A673 (cell line): ENCODE measurements at regions of chr11 and their contacts with region 1.

Region 1: GRCh38 chr11:109939166-109939810 is 153.9 kb upstream of the ZC3H12C start:
- DNase-seq: peak; percentile 91
- H3K4me3 ChIP-seq: no peak overlapping the region
- H3K27ac ChIP-seq: no peak overlapping the region
- H3K4me1 ChIP-seq: peaks cover 7% of the 10 kb centered on the region
- H3K27me3 ChIP-seq: no peaks in the 10 kb centered on the region
- CTCF ChIP-seq: peak; percentile 90

Region 2: DNA sequence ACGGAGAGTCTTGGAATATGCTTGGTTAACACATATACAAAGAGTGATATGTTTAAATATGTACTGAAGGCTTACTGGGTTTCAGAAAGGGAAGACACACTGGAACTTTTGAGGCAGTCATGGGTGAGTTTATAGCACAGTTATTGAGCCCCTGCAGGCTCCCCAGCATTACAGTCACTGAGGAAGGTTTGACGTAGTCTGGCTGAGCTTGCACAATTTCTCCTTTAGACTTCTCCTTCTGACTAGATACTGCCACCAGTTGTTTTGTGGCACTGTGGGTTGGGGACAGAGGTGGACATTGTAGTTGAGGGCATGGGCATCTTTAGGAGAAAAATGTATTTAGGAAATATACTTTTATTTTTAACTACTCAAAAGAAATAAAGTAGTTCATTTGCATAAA is 231.9 kb before region 1 on chr11:
- CTCF ChIA-PET with region 1: no interaction called
- POLR2A ChIA-PET with region 1: no interaction called
- intact Hi-C with region 1: loop called (anchors 10 kb)
- DNase-seq: no peak
- H3K4me3 ChIP-seq: no peak overlapping the region
- H3K27ac ChIP-seq: no peak overlapping the region
- H3K4me1 ChIP-seq: no peaks in the 10 kb centered on the region
- H3K27me3 ChIP-seq: peaks cover 56% of the 10 kb centered on the region
- CTCF ChIP-seq: no peak